CD4-positive, alpha-beta memory T cell (primary cell): ENCODE measurements at regions of chr3 and their contacts with region 1.

Region 1: GRCh38 chr3:42190701-42191462 is 75.1 kb downstream of the CCK start:
- DNase-seq: peak; percentile 49 to 61 (median 52)
- H3K4me3 ChIP-seq: no peak overlapping the region
- H3K4me3 Mint-ChIP-seq: no peak overlapping the region
- H3K27ac ChIP-seq: no peak overlapping the region
- H3K27ac Mint-ChIP-seq: peak overlapping the region in 5 of 7 donors; percentile 10 to 61 (median 51)
- H3K4me1 ChIP-seq: no peaks in the 10 kb centered on the region
- H3K4me1 Mint-ChIP-seq: peaks cover 4 to 19% (median 10%) of the 10 kb centered on the region in 4 donors
- H3K27me3 ChIP-seq: no peaks in the 10 kb centered on the region
- H3K27me3 Mint-ChIP-seq: no peaks in the 10 kb centered on the region

Region 2: DNA sequence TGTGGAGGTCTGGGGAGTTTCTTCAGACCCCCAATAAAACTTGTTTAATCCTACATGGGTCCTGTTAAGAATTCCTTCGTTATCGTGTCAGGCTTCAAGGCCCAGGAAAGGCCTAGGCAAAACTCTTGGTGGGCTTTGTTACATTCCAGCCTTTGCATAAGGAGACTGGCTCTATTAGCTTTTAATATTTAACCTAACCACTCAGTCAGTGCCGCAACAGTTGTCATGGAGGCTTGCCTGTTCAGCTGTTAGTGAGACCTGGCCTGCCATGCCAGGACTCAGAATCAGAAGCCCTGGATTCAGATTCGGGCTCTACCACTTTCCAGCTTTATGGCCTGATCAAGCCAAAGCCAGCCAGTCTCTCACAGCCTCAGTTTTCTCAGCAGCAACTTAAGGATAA is 1861.8 kb before region 1 on chr3:
- CTCF ChIA-PET with region 1: interaction called, 13 read pairs
- POLR2A ChIA-PET with region 1: no interaction called
- intact Hi-C with region 1: loop called (anchors 5 kb)
- DNase-seq: no peak
- H3K4me3 ChIP-seq: no peak overlapping the region
- H3K4me3 Mint-ChIP-seq: no peak overlapping the region
- H3K27ac ChIP-seq: no peak overlapping the region
- H3K27ac Mint-ChIP-seq: no peak overlapping the region
- H3K4me1 ChIP-seq: no peaks in the 10 kb centered on the region
- H3K4me1 Mint-ChIP-seq: peaks cover 3 to 4% (median 4%) of the 10 kb centered on the region in 4 donors
- H3K27me3 ChIP-seq: no peaks in the 10 kb centered on the region
- H3K27me3 Mint-ChIP-seq: peaks cover 3% of the 10 kb centered on the region in 2 donors

Region 3: DNA sequence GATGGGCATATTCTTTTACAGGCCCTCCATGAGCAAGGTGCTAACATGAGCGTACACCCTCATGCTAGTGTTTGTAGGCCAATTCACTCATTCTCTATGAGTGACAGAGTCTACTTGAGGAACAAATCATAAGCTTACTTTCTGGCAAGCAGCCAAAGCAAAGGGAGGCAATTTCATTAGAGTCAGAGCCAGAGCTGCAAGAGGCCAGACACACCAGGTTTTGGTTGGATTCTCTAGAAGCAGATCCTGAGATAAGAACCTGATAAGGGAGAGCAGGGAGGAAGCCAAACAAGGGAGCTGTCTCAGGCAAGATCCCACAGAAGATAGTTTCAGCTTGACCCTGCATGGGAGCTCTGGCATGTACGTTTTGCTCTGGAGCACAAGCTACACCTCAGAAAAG is 1205.7 kb before region 1 on chr3:
- CTCF ChIA-PET with region 1: no interaction called
- POLR2A ChIA-PET with region 1: no interaction called
- intact Hi-C with region 1: no loop called
- DNase-seq: no peak
- H3K4me3 ChIP-seq: no peak overlapping the region
- H3K4me3 Mint-ChIP-seq: no peak overlapping the region
- H3K27ac ChIP-seq: no peak overlapping the region
- H3K27ac Mint-ChIP-seq: no peak overlapping the region
- H3K4me1 ChIP-seq: no peaks in the 10 kb centered on the region
- H3K4me1 Mint-ChIP-seq: peaks cover 2 to 4% (median 3%) of the 10 kb centered on the region in 4 donors
- H3K27me3 ChIP-seq: no peaks in the 10 kb centered on the region
- H3K27me3 Mint-ChIP-seq: peaks cover 6 to 10% of the 10 kb centered on the region in 2 donors

Region 4: GRCh38 chr3:42118762-42119361 is 72.0 kb before region 1 on chr3:
- CTCF ChIA-PET with region 1: interaction called, 35 read pairs
- POLR2A ChIA-PET with region 1: no interaction called
- intact Hi-C with region 1: loop called (anchors 1 kb)
- DNase-seq: no peak
- H3K4me3 ChIP-seq: no peak overlapping the region
- H3K4me3 Mint-ChIP-seq: no peak overlapping the region
- H3K27ac ChIP-seq: no peak overlapping the region
- H3K27ac Mint-ChIP-seq: peak overlapping the region in 3 of 7 donors; percentile 37 to 61 (median 43)
- H3K4me1 ChIP-seq: no peaks in the 10 kb centered on the region
- H3K4me1 Mint-ChIP-seq: peaks cover 13 to 17% (median 16%) of the 10 kb centered on the region in 4 donors
- H3K27me3 ChIP-seq: no peaks in the 10 kb centered on the region
- H3K27me3 Mint-ChIP-seq: no peaks in the 10 kb centered on the region

Region 5: GRCh38 chr3:42169579-42170120 is 21.2 kb before region 1 on chr3:
- CTCF ChIA-PET with region 1: interaction called, 28 read pairs
- POLR2A ChIA-PET with region 1: no interaction called
- intact Hi-C with region 1: no loop called
- DNase-seq: no peak
- H3K4me3 ChIP-seq: no peak overlapping the region
- H3K4me3 Mint-ChIP-seq: no peak overlapping the region
- H3K27ac ChIP-seq: no peak overlapping the region
- H3K27ac Mint-ChIP-seq: peak overlapping the region in 3 of 7 donors; percentile 25 to 42 (median 27)
- H3K4me1 ChIP-seq: peaks cover 11% of the 10 kb centered on the region
- H3K4me1 Mint-ChIP-seq: peaks cover 25 to 44% (median 28%) of the 10 kb centered on the region in 4 donors
- H3K27me3 ChIP-seq: no peaks in the 10 kb centered on the region
- H3K27me3 Mint-ChIP-seq: no peaks in the 10 kb centered on the region

Region 6: DNA sequence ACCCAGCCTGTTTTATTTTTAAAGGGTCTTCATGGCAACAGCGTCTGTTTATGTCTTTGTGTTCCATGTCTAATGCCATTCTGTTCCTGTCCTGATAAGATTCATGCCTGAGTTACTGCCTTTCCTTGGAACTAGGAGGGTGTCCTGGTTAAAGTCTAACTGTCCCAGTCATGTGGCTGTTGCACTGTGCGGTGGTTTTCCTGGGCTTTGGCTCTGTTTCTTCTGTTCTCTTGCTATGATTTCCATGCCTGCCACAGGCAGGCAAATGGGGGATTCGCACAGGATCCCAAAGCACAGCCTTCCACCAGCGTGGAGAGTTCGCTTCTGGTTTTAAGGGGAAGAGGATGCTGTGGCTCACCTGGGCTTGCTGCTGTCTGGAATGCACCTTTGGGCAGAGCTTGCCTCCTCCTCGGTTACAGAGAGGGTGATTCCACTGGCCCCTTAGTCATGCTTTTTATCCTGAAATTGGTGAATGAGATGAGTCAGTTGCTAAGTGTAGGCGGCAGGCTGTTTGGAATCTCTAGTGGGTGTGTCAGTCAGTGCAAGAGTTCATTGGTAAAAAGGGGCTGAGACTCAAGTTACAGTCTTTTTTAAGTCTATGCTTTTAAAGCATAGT is 11.7 kb before region 1 on chr3:
- CTCF ChIA-PET with region 1: interaction called, 24 read pairs
- POLR2A ChIA-PET with region 1: no interaction called
- intact Hi-C with region 1: no loop called
- DNase-seq: no peak
- H3K4me3 ChIP-seq: no peak overlapping the region
- H3K4me3 Mint-ChIP-seq: no peak overlapping the region
- H3K27ac ChIP-seq: no peak overlapping the region
- H3K27ac Mint-ChIP-seq: peak overlapping the region in 1 of 7 donors; percentile 37
- H3K4me1 ChIP-seq: no peaks in the 10 kb centered on the region
- H3K4me1 Mint-ChIP-seq: peaks cover 0 to 6% (median 0%) of the 10 kb centered on the region in 4 donors
- H3K27me3 ChIP-seq: no peaks in the 10 kb centered on the region
- H3K27me3 Mint-ChIP-seq: no peaks in the 10 kb centered on the region

Region 7: GRCh38 chr3:42205800-42206514 is 15.1 kb after region 1 on chr3:
- CTCF ChIA-PET with region 1: interaction called, 45 read pairs
- POLR2A ChIA-PET with region 1: no interaction called
- intact Hi-C with region 1: no loop called
- DNase-seq: no peak
- H3K4me3 ChIP-seq: no peak overlapping the region
- H3K4me3 Mint-ChIP-seq: no peak overlapping the region
- H3K27ac ChIP-seq: no peak overlapping the region
- H3K27ac Mint-ChIP-seq: peak overlapping the region in 2 of 7 donors; percentile 61 to 77
- H3K4me1 ChIP-seq: no peaks in the 10 kb centered on the region
- H3K4me1 Mint-ChIP-seq: no peaks in the 10 kb centered on the region
- H3K27me3 ChIP-seq: no peaks in the 10 kb centered on the region
- H3K27me3 Mint-ChIP-seq: no peaks in the 10 kb centered on the region